IMR-90 (cell line): ENCODE measurements at regions of chr17 and their contacts with region 1.

Region 1: GRCh38 chr17:9900784-9901183 is 4.3 kb downstream of the RCVRN start:
- DNase-seq: peak; percentile 56
- ATAC-seq: peak; percentile 78
- H3K4me3 ChIP-seq: no peak overlapping the region
- H3K27ac ChIP-seq: no peak overlapping the region
- H3K4me1 ChIP-seq: peaks cover 14% of the 10 kb centered on the region
- H3K27me3 ChIP-seq: no peaks in the 10 kb centered on the region; the same call in 1 of the 2 replicates
- CTCF ChIP-seq: no peak
- POLR2A ChIP-seq: no peak
- RAD21 ChIP-seq: no peak

Region 2: DNA sequence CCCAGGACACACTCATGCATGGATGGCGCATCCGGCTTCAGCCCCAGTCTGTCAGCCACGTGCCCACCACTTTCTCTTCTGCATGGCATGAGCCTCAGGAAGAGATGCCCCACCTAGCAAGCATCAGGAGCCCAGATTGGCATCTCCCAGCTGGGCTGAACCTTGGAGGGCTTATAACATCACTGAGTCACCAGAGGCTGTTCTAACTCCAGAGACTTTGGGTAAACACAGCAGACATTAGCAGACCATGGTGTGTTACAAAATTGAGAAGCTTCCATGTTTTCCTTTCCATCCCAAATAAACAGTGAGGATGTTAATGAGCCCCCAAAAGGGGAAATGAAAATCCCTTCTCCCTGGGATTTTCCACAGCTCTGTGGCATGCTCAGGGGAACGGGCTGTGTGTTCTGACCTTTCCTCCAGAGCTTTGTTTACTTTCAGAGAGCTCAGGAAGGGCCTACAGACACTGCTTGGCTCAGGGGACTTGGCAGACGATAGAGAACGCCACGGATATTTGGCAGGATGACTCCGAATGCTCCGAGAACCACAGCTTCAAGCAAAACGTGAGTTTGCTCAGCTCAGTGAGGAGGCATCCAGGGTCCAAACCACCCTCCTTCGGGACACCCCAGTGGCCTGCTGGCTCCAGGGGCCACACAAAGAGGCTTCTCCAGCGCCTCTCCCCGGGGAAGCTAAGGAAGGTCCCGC is 58.6 kb before region 1 on chr17:
- CTCF ChIA-PET with region 1: interaction called, 5 read pairs
- POLR2A ChIA-PET with region 1: no interaction called
- dilution Hi-C with region 1: no loop called
- in situ Hi-C with region 1: no loop called
- intact Hi-C with region 1: loop called (anchors 5 kb)
- DNase-seq: peak; percentile 77
- ATAC-seq: peak; percentile 78
- H3K4me3 ChIP-seq: no peak overlapping the region
- H3K27ac ChIP-seq: peak overlapping the region; percentile 87
- H3K4me1 ChIP-seq: peaks cover 12% of the 10 kb centered on the region
- H3K27me3 ChIP-seq: no peaks in the 10 kb centered on the region
- CTCF ChIP-seq: no peak
- POLR2A ChIP-seq: no peak
- RAD21 ChIP-seq: no peak

Region 3: DNA sequence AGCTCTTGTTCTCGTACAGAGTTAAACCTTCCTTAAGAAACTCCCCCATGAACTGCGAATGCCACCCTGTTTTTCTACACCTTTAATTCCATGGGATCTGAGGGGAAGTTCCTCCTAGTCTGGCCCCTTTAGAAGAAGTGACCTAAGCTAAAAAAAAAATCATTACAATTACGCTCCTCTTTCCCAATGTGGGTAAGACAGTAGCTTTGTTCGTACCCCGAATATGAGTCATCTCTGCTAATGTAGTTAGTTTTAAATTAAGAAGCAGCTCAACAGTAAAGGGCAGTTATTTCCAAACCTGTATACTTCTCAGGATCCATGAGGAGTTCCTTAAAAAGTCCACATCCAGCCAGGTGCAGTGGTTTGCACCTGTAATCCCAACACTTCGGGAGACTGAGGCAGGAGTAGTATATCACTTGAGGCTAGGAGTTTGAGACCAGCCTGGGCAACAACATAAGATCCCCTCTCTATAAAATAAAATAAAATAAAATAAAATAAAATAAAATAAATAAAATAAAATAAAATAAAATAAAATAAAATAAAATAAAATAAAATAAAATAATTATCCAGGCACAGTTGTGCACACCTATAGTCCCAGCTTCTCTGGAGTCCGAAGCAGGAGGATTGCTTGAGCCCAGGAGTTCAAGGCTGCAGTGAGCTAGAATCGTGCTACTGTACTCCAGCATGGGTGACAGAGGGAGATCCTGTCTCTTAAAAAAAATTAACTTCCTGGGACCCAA is 21.8 kb before region 1 on chr17:
- CTCF ChIA-PET with region 1: no interaction called
- POLR2A ChIA-PET with region 1: interaction called, 5 read pairs
- dilution Hi-C with region 1: no loop called
- in situ Hi-C with region 1: no loop called
- intact Hi-C with region 1: loop called (anchors 1 kb)
- DNase-seq: peak; percentile 12
- ATAC-seq: no peak
- H3K4me3 ChIP-seq: no peak overlapping the region
- H3K27ac ChIP-seq: no peak overlapping the region
- H3K4me1 ChIP-seq: no peaks in the 10 kb centered on the region; the same call in 1 of the 2 replicates
- H3K27me3 ChIP-seq: no peaks in the 10 kb centered on the region
- CTCF ChIP-seq: no peak
- POLR2A ChIP-seq: no peak
- RAD21 ChIP-seq: no peak